Activated CD4-positive, alpha-beta T cell treated with anti-CD3 and anti-CD28 coated beads, Interleukin-2, amount 10 ng/mL, durations not matched to agents 24 days and 14 days (primary cell): ENCODE measurements at regions of chr18 and their contacts with region 1.

Region 1: GRCh38 chr18:22813648-22814328 is 119.3 kb upstream of the RBBP8 start:
- DNase-seq: peak; percentile 69
- H3K4me3 Mint-ChIP-seq: no peak overlapping the region
- H3K27ac Mint-ChIP-seq: no peak overlapping the region
- H3K4me1 Mint-ChIP-seq: no peaks in the 10 kb centered on the region
- H3K27me3 Mint-ChIP-seq: peaks cover 22% of the 10 kb centered on the region

Region 2: DNA sequence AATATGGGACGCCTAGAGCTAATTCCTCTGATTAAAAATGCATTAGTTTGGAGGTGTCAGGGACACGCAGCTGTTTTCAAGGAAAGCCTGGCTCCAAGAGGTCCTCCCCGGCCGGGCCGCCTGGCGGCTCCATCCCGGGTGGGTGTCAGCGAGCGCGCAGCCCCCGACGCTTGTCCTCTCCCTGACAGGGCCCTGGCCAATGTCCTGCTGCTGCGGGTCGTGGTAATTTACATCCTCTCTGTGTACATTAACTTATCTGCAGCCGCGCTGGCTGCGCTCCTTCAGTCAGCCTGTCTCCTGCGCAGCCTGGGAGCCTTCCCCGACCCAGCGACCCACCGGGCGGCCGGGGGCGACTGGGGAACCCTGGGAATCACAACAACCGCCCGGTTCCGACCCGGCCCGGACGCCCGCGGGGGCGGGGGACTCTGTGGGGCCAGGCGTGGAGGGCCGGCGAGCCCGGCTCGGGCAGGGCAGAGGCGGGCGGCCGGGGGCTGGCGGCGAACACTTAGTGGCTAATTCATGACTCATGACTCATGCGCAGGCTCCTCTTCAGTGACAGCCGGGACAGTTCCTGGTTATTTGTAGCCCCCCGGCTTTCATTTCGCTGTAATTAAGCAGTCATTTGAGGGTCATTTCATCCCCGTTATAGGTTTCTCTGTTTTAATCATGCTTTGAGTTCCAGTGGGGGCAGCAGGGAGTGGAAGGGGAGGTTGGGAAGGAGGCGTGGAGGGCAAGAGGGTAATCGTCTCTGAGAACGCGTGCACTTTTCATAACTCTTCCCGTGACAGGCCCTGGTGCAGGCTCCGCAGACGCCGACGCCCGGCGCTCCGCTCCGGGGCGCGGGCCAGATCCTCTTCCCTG is 254.1 kb before region 1 on chr18:
- intact Hi-C with region 1: no loop called
- DNase-seq: no peak
- H3K4me3 Mint-ChIP-seq: no peak overlapping the region
- H3K27ac Mint-ChIP-seq: no peak overlapping the region
- H3K4me1 Mint-ChIP-seq: peaks cover 2% of the 10 kb centered on the region
- H3K27me3 Mint-ChIP-seq: peaks cover 35% of the 10 kb centered on the region

Region 3: DNA sequence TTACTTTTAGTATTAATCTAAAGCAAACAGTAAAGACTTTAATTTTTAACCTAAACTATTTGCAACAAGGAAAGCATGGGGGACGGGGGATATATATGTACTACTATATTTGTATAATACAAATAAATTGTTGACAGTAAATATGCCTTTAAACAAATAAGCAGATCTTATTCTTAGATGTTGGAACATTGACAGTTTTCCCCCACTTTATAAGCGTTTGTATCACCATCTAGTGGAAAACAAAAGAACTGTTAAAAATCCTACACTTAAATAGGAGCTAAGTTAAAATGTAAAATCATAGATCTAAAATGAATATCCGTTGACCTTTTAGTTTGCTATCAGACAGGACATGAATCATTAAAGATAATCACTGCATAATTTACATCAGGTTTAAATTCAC is 169.4 kb after region 1 on chr18:
- intact Hi-C with region 1: loop called (anchors 5 kb)
- DNase-seq: no peak
- H3K4me3 Mint-ChIP-seq: no peak overlapping the region
- H3K27ac Mint-ChIP-seq: no peak overlapping the region
- H3K4me1 Mint-ChIP-seq: peaks cover 9% of the 10 kb centered on the region
- H3K27me3 Mint-ChIP-seq: no peaks in the 10 kb centered on the region

Region 4: DNA sequence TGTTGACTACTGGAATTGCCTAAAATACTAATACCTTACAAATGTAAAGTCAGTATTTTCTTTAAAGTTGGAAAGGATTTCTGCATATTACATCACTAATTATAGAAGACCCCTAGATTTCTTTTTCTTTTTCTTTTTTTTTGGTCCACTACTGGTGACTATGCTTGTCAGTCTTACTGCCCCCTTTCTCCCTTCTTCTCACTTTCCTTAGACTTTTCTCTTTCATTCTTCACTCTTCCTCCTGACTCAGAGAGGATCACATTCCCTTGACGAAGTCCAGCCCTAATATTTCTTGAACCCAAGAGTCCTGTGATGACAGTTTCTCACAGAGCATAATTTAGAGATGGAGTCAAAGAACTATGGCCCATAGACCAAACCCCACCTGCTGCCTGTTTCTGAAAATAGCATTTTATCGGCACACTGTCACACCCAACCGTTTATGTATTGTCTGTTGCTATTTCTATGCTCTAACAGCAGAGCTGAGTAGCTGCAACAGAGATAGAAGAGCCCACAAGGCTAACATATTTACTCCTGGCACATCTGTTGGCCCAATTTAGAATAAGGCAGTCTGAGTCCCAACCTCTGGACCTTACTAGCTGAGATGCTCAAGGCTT is 598.7 kb after region 1 on chr18:
- intact Hi-C with region 1: loop called (anchors 5 kb)
- DNase-seq: no peak
- H3K4me3 Mint-ChIP-seq: no peak overlapping the region
- H3K27ac Mint-ChIP-seq: no peak overlapping the region
- H3K4me1 Mint-ChIP-seq: no peaks in the 10 kb centered on the region
- H3K27me3 Mint-ChIP-seq: no peaks in the 10 kb centered on the region